HAP-1 (cell line): ENCODE measurements at regions of chr4 and their contacts with region 1.

Region 1: DNA sequence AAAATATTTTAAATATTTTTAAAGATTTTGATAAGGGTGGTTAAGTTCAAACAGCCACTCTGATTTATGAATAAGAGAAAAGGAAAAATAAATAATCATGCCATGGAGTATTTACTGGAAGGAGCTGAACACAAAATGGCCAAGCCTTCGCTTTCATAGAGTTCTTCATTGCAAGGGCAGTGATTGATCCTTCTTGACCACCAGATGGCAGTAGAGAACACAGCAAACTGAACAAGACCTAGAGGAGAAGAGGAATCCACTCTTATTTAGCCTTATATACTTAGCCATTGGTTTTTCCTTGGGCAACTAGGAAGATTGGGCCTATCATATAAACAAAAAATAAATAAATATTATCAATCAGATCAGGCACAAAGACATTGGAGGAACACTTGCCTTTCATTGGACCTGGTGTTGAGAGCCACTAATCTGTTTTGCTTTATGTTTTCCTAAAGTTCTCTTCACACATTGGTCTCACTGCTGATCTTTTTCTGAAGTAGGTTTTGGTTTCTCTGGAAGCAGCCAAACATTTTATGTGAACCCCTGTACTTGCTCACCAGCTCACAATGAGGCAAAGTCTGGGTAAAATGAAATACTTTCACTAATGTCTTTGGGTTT is 58.1 kb upstream of the PARM1 start:
- DNase-seq: peak; percentile 56 to 81
- H3K4me3 ChIP-seq: no peak overlapping the region
- H3K4me1 ChIP-seq: no peaks in the 10 kb centered on the region
- H3K27me3 ChIP-seq: no peaks in the 10 kb centered on the region

Region 2: DNA sequence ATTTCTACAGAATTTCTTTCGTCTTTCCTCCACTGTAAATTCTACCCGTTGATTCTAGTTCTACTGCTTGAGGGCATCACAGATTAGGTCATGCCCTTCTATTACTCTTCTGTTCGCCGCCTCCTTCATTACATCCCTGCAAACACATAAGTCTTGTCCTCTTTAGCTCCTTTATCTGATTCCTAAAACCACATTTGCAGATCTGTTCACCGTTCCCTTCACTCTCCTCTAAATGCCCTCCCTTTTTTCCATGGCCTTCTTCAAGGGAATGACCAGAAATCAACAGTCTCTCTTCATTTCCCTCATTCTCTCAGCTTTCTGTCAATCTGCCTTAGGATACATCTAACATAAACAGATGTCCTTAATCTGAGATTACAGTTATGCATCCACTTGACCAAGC is 123.6 kb before region 1 on chr4:
- in situ Hi-C with region 1: no loop called
- DNase-seq: no peak
- H3K4me3 ChIP-seq: no peak overlapping the region
- H3K4me1 ChIP-seq: peaks cover 4% of the 10 kb centered on the region; the same call in 1 of the 2 replicates
- H3K27me3 ChIP-seq: peaks cover 21% of the 10 kb centered on the region

Region 3: GRCh38 chr4:75289914-75290582 is 415.2 kb after region 1 on chr4:
- in situ Hi-C with region 1: loop called (anchors 25 kb)
- DNase-seq: peak; percentile 50 to 51
- H3K4me3 ChIP-seq: no peak overlapping the region
- H3K4me1 ChIP-seq: peaks cover 11% of the 10 kb centered on the region
- H3K27me3 ChIP-seq: no peaks in the 10 kb centered on the region

Region 4: DNA sequence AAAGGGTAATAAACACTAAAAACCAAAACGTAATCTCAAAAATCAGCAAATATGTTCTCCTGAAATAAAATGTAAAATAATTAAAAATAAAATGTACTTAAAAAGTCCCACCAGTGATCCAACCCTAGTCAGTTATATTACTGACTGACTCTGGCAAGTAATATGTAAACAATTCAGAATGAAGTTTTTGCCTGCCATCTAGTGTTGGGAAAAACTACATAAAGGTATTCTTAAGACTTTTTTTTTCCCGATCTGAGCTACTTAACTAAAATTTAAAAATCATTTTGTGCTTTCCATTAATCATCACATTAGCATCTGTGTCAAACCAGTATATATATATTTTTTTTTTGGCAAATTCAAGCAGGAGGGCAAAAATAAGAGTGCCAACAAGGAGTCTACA is 615.3 kb after region 1 on chr4:
- in situ Hi-C with region 1: loop called (anchors 25 kb)
- DNase-seq: peak in 1 of 2 experiments; percentile 8
- H3K4me3 ChIP-seq: no peak overlapping the region
- H3K4me1 ChIP-seq: peaks cover 7% of the 10 kb centered on the region
- H3K27me3 ChIP-seq: no peaks in the 10 kb centered on the region